Activated T-helper 1 cell treated with anti-CD3 and anti-CD28 coated beads, Interleukin-12 subunit alpha, Interleukin-12 subunit beta, Interleukin-2, Interleukin-4 antibody, amounts not matched to agents 30 ng/mL and 10 ng/mL and 1 ng/mL, durations not matched to agents 14 hours and 24 hours and 36 hours (primary cell): ENCODE measurements at regions of chr16 and their contacts with region 1.

Region 1: GRCh38 chr16:66563574-66564334 is 2.5 kb upstream of the CMTM1 start:
- DNase-seq: no peak
- H3K4me3 Mint-ChIP-seq: no peak overlapping the region
- H3K27ac Mint-ChIP-seq: peak overlapping the region; percentile 70
- H3K4me1 Mint-ChIP-seq: peaks cover 69% of the 10 kb centered on the region
- H3K27me3 Mint-ChIP-seq: no peaks in the 10 kb centered on the region

Region 2: GRCh38 chr16:66516808-66517585 is 46.8 kb before region 1 on chr16:
- intact Hi-C with region 1: loop called (anchors 1 kb)
- DNase-seq: peak; percentile 84
- H3K4me3 Mint-ChIP-seq: peak overlapping the region; percentile 88
- H3K27ac Mint-ChIP-seq: peak overlapping the region; percentile 99
- H3K4me1 Mint-ChIP-seq: peaks cover 78% of the 10 kb centered on the region
- H3K27me3 Mint-ChIP-seq: no peaks in the 10 kb centered on the region

Region 3: DNA sequence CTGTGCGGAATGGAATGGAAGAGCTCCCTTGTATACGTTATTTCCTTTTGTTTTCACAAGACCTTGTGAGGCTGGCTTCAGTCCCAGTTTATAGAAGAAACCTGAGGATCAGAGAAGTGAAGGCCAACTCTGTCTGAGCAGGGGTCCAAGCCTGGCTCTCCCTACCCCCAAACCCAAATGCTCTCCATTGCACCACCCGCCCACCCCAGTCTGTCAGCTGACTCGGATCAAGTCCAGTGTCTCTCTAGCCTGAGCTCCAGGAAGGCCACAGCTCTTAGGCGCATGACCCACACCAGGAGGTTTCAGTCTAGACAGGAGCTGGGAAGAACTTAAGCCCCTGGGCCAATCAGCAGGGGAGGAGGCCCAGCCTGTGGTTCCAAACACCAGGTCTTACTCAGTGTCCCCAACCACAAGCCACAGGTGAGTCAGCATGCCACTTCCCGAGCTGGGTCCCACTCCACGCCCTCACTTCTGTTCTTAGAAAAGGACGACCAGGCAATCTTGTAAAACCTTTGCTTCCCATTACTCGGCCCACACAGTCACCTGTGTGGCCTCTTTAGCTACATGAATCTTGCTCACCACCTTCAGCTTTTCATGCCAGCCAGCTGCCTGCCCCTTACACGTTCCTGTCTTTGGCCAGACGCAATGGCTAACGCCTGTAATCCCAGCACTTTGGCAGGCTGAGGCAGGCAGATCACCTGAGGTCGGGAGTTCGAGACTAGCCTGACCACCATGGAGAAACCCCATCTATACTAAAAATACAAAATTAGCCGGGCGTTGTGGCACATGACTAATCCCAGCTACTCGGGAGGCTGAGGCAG is 41.6 kb before region 1 on chr16:
- intact Hi-C with region 1: loop called (anchors 1 kb)
- DNase-seq: peak; percentile 88
- H3K4me3 Mint-ChIP-seq: peak overlapping the region; percentile 53
- H3K27ac Mint-ChIP-seq: peak overlapping the region; percentile 77
- H3K4me1 Mint-ChIP-seq: peaks cover 93% of the 10 kb centered on the region
- H3K27me3 Mint-ChIP-seq: peaks cover 2% of the 10 kb centered on the region

Region 4: GRCh38 chr16:66552286-66553177 is 11.2 kb before region 1 on chr16 and contains the start of gene CKLF:
- intact Hi-C with region 1: loop called (anchors 1 kb)
- DNase-seq: peak; percentile 93
- H3K4me3 Mint-ChIP-seq: peak within 1 kb of the TSS; percentile 99
- H3K27ac Mint-ChIP-seq: peak within 1 kb of the TSS; percentile 95
- H3K4me1 Mint-ChIP-seq: peaks cover 81% of the 10 kb centered on the region
- H3K27me3 Mint-ChIP-seq: peaks cover 2% of the 10 kb centered on the region
- total RNA-seq, gene CKLF: 153 and 159 TPM in 2 replicates

Region 5: GRCh38 chr16:66580605-66581209 is 17.0 kb after region 1 on chr16:
- intact Hi-C with region 1: loop called (anchors 2 kb)
- DNase-seq: no peak
- H3K4me3 Mint-ChIP-seq: no peak overlapping the region
- H3K27ac Mint-ChIP-seq: no peak overlapping the region
- H3K4me1 Mint-ChIP-seq: peaks cover 17% of the 10 kb centered on the region
- H3K27me3 Mint-ChIP-seq: peaks cover 34% of the 10 kb centered on the region

Region 6: DNA sequence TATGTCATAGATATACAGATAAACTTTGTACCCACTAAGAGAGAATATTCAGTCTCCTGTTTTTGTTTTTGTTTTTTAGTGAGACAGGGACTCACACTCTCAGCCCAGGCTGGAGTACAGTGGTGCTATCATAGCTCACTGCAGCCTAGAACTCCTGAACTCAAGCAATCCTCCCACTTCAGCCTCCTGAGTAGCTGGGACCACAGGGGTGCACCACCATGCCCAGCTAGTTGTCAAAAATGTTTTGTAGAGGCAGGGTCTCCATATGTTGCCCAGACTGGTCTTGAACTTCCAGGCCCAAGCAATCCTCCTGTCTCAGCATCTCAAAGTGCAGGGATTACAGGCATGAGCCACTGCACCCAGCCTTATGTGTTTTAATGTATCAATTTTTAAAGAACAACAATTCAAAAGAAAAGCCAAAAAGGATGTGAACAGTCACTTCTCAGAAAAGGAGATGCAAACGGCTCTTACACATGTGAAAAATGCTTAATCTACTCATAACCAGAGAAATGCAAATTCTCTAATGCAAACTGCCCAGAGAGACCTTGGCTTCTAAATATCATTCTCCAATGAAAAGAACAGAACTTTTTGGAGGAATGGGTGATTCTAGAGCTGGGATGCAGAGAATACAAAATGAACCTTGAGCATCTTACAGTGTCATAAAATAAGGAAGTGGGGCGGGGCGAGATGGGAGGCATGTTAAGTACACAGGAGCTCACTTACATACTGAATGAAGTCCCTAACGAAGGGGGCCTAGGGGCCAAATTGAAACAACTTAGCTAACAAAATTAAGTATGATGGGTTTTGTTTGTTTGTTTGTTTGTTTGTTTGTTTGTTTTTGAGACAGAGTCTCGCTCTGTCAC is 33.5 kb after region 1 on chr16:
- intact Hi-C with region 1: loop called (anchors 2 kb)
- DNase-seq: no peak
- H3K4me3 Mint-ChIP-seq: peak overlapping the region; percentile 31
- H3K27ac Mint-ChIP-seq: peak overlapping the region; percentile 91
- H3K4me1 Mint-ChIP-seq: peaks cover 46% of the 10 kb centered on the region
- H3K27me3 Mint-ChIP-seq: no peaks in the 10 kb centered on the region